CD8-positive, alpha-beta memory T cell (primary cell): ENCODE measurements at regions of chr2 and their contacts with region 1.

Region 1: DNA sequence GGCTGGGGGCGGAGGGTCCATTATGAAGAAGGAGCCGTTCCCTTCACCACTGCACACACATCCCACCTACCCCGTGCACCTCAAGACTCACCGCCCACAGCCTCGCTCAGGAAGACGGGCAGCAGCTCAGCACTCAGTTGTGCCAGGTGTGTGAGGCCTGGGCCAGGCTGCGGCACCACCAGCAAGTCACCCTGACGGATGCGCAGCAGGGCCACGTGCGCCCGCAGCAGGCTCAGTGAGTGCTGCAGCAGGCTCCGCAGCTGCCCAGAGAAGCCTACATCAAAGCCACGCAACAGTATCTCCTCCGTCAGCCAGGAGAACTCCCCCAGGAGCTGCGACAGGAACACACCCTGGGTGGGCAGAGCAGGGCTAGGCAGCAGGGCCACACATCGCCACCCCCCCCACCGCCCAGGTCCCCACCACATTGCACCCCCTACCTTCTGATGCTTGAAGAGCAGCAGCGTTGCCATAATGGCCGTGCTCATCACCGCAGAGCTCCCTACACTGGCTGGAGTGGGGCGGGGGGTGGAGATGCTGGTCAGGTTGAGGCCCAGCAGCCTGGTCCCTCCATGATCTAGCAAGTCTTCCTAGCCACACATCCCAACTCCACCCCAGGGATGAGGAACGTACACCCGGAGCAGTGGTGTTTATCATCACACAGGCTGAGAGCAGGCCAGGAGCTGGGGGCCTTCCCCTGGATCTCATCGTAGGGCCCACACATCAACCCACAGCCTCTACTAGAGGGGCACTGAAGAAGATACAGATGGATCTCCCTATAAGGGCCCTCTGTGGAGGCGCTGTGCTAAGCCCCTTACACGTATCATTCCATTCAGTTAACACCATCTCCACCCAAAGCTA is 10.2 kb downstream of the GPAT2 start:
- DNase-seq: no peak
- H3K4me3 ChIP-seq: no peak overlapping the region
- H3K4me3 Mint-ChIP-seq: no peak overlapping the region
- H3K27ac ChIP-seq: no peak overlapping the region
- H3K27ac Mint-ChIP-seq: no peak overlapping the region
- H3K4me1 ChIP-seq: no peaks in the 10 kb centered on the region
- H3K4me1 Mint-ChIP-seq: peaks cover 2 to 3% (median 3%) of the 10 kb centered on the region in 3 donors
- H3K27me3 ChIP-seq: no peaks in the 10 kb centered on the region
- H3K27me3 Mint-ChIP-seq: no peaks in the 10 kb centered on the region

Region 2: DNA sequence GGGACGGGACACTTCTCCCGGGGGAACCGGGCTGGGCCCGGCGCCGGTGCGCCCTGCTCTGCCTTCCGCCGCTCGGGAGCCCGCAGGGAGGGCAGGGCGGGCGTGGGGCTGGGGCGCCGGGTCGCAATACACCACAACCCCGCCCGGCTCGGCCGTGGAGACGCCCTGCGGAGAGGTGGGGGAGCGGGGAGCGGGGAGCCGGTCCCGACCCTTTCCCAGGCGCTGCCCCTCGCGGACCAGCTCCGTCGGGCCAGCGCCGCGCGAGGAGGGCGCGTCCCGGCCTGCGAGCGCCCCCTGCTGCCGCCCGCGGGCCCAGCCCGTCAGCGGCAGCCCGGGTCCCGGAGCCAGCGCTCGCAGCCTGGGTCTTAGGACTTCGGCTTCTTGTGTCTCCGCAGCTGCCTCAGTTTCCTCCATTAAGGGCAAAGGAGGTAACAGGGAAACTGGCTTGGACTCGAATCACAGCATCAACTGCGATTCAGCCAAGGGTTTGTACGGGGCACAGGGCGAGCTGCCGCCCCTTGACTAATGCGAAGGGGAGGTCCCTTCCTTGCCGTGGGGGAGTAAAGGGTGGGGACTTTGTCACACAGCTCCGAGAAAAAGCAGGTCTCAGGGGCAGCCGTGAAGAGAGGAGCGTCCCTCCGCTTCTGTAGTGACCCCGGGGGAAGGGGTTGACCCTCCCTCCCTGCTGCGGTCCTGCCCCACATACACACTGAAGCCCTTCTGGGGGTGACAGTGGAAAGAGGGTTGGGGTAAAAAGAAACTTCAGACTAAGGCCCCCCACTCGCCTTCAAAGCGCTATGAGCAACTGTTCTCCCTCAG is 92.5 kb after region 1 on chr2:
- CTCF ChIA-PET with region 1: interaction called, 16 read pairs
- POLR2A ChIA-PET with region 1: no interaction called
- DNase-seq: peak; percentile 48 to 72 (median 63)
- H3K4me3 ChIP-seq: peak overlapping the region; percentile 29
- H3K4me3 Mint-ChIP-seq: peak overlapping the region; percentile 47 to 87 (median 75)
- H3K27ac ChIP-seq: no peak overlapping the region
- H3K27ac Mint-ChIP-seq: peak overlapping the region in 4 of 8 donors; percentile 27 to 47 (median 30)
- H3K4me1 ChIP-seq: peaks cover 7% of the 10 kb centered on the region
- H3K4me1 Mint-ChIP-seq: peaks cover 9 to 35% (median 11%) of the 10 kb centered on the region in 3 donors
- H3K27me3 ChIP-seq: no peaks in the 10 kb centered on the region
- H3K27me3 Mint-ChIP-seq: peaks cover 19% of the 10 kb centered on the region in 2 donors